CD4-positive, alpha-beta T cell (primary cell): ENCODE measurements at regions of chr9 and their contacts with region 1.

Region 1: DNA sequence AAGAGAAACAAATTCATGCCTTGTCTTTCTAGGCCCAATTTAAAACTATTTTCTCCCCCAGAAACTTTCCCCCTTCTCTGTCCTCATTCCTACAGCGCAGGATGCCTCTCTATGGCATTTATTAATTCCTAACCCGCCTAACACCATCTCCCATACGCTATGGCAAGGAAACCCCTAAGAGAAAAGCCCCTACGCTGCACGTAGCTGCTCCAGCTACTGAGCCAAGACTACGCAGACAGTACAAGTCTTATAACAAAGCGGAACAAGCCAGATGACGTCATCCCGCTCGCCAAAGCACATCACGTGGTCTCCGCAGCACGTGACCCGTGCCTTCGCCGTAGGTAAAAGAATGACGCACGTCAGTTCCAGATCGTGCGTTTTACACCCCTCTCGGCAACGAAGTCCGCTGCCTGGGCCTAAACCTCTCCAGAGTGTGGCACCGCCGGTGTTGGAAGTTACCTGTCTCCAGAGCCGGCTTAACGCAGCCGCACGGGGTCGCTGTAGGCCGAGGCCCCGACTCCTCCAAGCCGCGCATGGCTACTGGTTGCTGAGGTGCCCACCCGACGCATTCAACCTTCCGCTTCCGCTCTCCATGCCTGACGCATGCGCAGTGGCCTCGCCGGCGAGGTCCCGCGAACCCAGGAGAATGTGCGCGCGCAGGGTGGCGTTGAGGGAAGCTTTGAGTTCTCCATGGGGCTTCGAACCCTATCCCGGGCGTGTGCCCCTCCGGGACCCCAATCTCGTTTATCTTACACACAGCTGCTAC is at the start of gene TRMO:
- DNase-seq: peak; percentile 96 to 100 (median 98)
- ATAC-seq: peak; percentile 76
- H3K4me3 ChIP-seq: peak within 1 kb of the TSS; percentile 76
- H3K4me3 Mint-ChIP-seq: peak within 1 kb of the TSS; percentile 88
- H3K27ac ChIP-seq: peak within 1 kb of the TSS; percentile 99
- H3K27ac Mint-ChIP-seq: peak within 1 kb of the TSS; percentile 96
- H3K4me1 ChIP-seq: peaks cover 43% of the 10 kb centered on the region
- H3K4me1 Mint-ChIP-seq: peaks cover 59% of the 10 kb centered on the region
- H3K27me3 ChIP-seq: no peaks in the 10 kb centered on the region
- H3K27me3 Mint-ChIP-seq: peaks cover 3% of the 10 kb centered on the region
- CTCF ChIP-seq: peak; percentile 67
- total RNA-seq, gene TRMO: 42.8 to 45.8 TPM

Region 2: DNA sequence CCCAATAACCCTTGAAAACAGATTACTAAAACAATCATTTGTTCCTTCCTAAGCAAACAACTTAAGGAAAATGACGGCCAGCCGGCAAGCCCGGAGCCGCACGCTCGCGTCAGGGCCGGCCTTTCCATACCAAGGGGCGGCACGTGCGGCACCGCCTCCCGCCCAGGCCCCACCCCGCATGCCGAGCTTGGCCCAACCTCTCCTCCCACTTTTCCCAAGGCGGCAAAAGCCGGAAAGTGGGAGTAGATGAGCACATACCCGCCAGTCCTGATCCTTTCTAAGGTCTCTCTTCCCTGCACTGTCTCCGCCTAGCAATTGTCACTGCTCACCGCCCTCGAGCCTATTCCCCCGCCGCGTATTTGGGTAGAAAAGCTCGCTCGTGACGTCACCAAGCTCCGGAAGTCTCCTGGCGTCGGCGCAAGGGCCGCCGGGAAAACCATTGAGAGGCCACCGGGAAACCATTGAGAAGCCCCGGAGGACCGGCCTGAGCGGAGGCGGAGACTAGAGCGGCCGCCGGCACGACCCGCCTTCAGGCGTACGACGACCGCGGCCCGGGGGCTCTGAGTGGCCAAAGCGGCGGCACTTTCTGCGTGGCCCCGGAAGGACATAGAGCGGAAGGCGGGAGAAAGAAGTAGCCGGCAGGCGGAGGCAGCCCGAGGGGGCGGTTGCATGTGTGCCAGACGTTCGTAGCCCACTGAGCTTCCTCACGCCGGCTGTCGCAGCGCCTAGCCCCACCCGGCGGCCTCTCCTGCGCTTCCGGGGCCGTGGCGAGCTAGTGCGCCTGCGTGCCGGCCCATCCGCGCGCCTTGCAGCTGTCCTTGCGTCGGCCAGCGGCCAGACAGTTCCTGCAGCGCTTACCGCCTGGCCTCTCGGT is 288.9 kb before region 1 on chr9 and contains the starts of genes NCBP1 and TSTD2:
- CTCF ChIA-PET with region 1: no interaction called
- POLR2A ChIA-PET with region 1: interaction called, 31 read pairs
- intact Hi-C with region 1: no loop called
- DNase-seq: peak; percentile 92 to 99 (median 94)
- ATAC-seq: peak; percentile 82
- H3K4me3 ChIP-seq: peak within 1 kb of the TSS; percentile 72
- H3K4me3 Mint-ChIP-seq: peak within 1 kb of the TSS; percentile 97
- H3K27ac ChIP-seq: peak within 1 kb of the TSS; percentile 95 to 97
- H3K27ac Mint-ChIP-seq: peak within 1 kb of the TSS; percentile 99
- H3K4me1 ChIP-seq: peaks cover 37% of the 10 kb centered on the region
- H3K4me1 Mint-ChIP-seq: peaks cover 73% of the 10 kb centered on the region
- H3K27me3 ChIP-seq: no peaks in the 10 kb centered on the region
- H3K27me3 Mint-ChIP-seq: no peaks in the 10 kb centered on the region
- CTCF ChIP-seq: no peak
- total RNA-seq, gene NCBP1: 50.7 to 53.5 TPM
- total RNA-seq, gene TSTD2: 23.8 to 26.0 TPM

Region 3: GRCh38 chr9:97895695-97896332 is 26.3 kb before region 1 on chr9:
- CTCF ChIA-PET with region 1: interaction called, 221 read pairs
- POLR2A ChIA-PET with region 1: interaction called, 335 read pairs
- intact Hi-C with region 1: no loop called
- DNase-seq: peak in 3 of 14 experiments; percentile 31 to 49 (median 37)
- ATAC-seq: no peak
- H3K4me3 ChIP-seq: no peak overlapping the region
- H3K4me3 Mint-ChIP-seq: no peak overlapping the region
- H3K27ac ChIP-seq: no peak overlapping the region
- H3K27ac Mint-ChIP-seq: peak overlapping the region; percentile 8
- H3K4me1 ChIP-seq: peaks cover 8% of the 10 kb centered on the region
- H3K4me1 Mint-ChIP-seq: peaks cover 32% of the 10 kb centered on the region
- H3K27me3 ChIP-seq: no peaks in the 10 kb centered on the region
- H3K27me3 Mint-ChIP-seq: no peaks in the 10 kb centered on the region
- CTCF ChIP-seq: peak; percentile 21

Region 4: DNA sequence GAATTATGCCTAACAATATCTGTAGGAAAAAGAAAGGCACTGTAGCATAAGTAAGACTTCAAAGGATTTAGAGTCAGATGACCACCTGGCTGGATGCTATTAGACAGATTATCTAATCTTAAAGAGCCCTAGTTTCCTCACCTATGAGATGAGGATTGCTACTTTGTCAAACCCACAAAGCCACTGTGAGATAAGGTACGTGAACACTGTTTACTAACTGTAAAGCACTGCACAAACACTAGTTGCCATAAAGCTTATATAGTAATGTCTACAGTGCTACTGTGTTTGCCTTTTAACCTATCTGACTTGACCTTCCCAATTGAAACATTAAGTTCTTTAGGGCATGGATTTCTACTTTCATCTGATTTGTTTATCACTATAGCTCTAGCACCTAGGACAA is 10.2 kb before region 1 on chr9:
- CTCF ChIA-PET with region 1: interaction called, 221 read pairs
- POLR2A ChIA-PET with region 1: interaction called, 335 read pairs
- intact Hi-C with region 1: loop called in 1 of 2 experiments (anchors 2 kb)
- DNase-seq: peak in 1 of 14 experiments; percentile 21
- ATAC-seq: no peak
- H3K4me3 ChIP-seq: no peak overlapping the region
- H3K4me3 Mint-ChIP-seq: no peak overlapping the region
- H3K27ac ChIP-seq: peak overlapping the region in 1 of 2 donors; percentile 45
- H3K27ac Mint-ChIP-seq: peak overlapping the region; percentile 96
- H3K4me1 ChIP-seq: peaks cover 58% of the 10 kb centered on the region
- H3K4me1 Mint-ChIP-seq: peaks cover 91% of the 10 kb centered on the region
- H3K27me3 ChIP-seq: no peaks in the 10 kb centered on the region
- H3K27me3 Mint-ChIP-seq: no peaks in the 10 kb centered on the region
- CTCF ChIP-seq: no peak

Region 5: GRCh38 chr9:97961361-97961760 is 39.2 kb after region 1 on chr9:
- CTCF ChIA-PET with region 1: interaction called, 44 read pairs
- POLR2A ChIA-PET with region 1: interaction called, 13 read pairs
- intact Hi-C with region 1: no loop called
- DNase-seq: no peak
- ATAC-seq: no peak
- H3K4me3 ChIP-seq: no peak overlapping the region
- H3K4me3 Mint-ChIP-seq: no peak overlapping the region
- H3K27ac ChIP-seq: no peak overlapping the region
- H3K27ac Mint-ChIP-seq: no peak overlapping the region
- H3K4me1 ChIP-seq: no peaks in the 10 kb centered on the region
- H3K4me1 Mint-ChIP-seq: no peaks in the 10 kb centered on the region
- H3K27me3 ChIP-seq: no peaks in the 10 kb centered on the region
- H3K27me3 Mint-ChIP-seq: peaks cover 2% of the 10 kb centered on the region
- CTCF ChIP-seq: no peak

Region 6: DNA sequence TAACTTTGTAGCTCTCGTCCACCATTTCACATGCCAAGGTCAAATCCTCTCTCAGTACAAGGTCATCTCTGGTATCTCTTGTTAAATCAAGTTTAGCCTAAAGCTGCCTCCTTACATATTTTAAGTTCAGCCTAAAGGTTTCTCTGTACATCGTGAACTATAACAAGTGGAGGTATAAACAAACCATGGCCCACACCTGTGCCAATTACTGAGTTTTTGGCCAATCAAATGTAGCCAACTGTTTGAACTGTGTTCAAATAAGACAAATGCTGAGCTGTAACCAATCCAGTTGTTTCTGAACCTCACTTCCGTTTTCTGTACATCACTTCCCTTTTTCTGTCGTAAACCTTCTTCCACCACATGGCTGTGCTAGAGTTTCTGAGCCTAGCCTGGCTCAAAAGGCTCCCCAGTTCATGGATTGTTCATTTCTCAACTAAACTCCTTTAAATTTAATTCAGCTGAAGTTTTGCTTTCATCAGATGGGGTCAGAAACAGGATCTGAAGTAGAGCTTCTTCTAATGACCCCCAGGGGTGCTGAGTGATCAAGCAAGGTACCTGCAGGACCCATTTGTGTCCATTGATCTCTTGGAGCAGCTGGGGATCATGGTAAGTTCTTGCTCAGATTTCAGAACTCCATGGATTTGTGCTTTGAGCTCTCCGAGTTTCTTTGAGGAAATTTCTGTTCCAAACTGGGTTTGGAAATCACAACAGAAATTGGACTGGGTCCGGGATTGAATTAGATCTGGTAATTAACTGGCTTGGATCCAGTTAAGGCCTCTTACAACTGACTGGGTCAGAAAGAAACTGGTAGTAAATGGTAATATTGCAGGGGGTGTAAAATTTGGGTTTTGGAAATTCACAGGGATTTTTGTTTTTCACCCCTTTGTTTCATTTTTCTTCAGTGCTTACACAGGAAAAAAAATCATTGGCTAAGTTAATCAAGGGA is 123.4 kb after region 1 on chr9:
- CTCF ChIA-PET with region 1: interaction called, 19 read pairs
- POLR2A ChIA-PET with region 1: interaction called, 12 read pairs
- intact Hi-C with region 1: no loop called
- DNase-seq: peak in 9 of 14 experiments; percentile 3 to 87 (median 19)
- ATAC-seq: peak; percentile 98
- H3K4me3 ChIP-seq: peak overlapping the region; percentile 50
- H3K4me3 Mint-ChIP-seq: peak overlapping the region; percentile 45
- H3K27ac ChIP-seq: peak overlapping the region in 1 of 2 donors; percentile 61
- H3K27ac Mint-ChIP-seq: peak overlapping the region; percentile 86
- H3K4me1 ChIP-seq: peaks cover 17% of the 10 kb centered on the region
- H3K4me1 Mint-ChIP-seq: peaks cover 30% of the 10 kb centered on the region
- H3K27me3 ChIP-seq: no peaks in the 10 kb centered on the region
- H3K27me3 Mint-ChIP-seq: no peaks in the 10 kb centered on the region
- CTCF ChIP-seq: peak; percentile 18

Region 7: GRCh38 chr9:98118640-98119601 is 196.8 kb after region 1 on chr9 and contains the start of gene TRIM14:
- CTCF ChIA-PET with region 1: no interaction called
- POLR2A ChIA-PET with region 1: interaction called, 8 read pairs
- intact Hi-C with region 1: loop called in 1 of 2 experiments (anchors 5 kb)
- DNase-seq: peak in 12 of 14 experiments; percentile 28 to 74 (median 46)
- ATAC-seq: peak; percentile 38
- H3K4me3 ChIP-seq: peak within 1 kb of the TSS; percentile 89
- H3K4me3 Mint-ChIP-seq: peak within 1 kb of the TSS; percentile 90
- H3K27ac ChIP-seq: peak within 1 kb of the TSS; percentile 79 to 84
- H3K27ac Mint-ChIP-seq: peak within 1 kb of the TSS; percentile 95
- H3K4me1 ChIP-seq: peaks cover 66% of the 10 kb centered on the region
- H3K4me1 Mint-ChIP-seq: peaks cover 65% of the 10 kb centered on the region
- H3K27me3 ChIP-seq: no peaks in the 10 kb centered on the region
- H3K27me3 Mint-ChIP-seq: no peaks in the 10 kb centered on the region
- CTCF ChIP-seq: no peak
- total RNA-seq, gene TRIM14: 23.5 to 23.6 TPM